ENCODE measurements at regions of chr4 and their contacts with region 1.

Region 1: GRCh38 chr4:125541836-125542385 is 227.2 kb downstream of the FAT4 start:
- DNase-seq: no peak
- H3K4me3 ChIP-seq: no peak overlapping the region
- H3K27ac ChIP-seq: no peak overlapping the region
- H3K4me1 ChIP-seq: no peaks in the 10 kb centered on the region
- H3K27me3 ChIP-seq: no peaks in the 10 kb centered on the region
- CTCF ChIP-seq: no peak
- POLR2A ChIP-seq: no peak

Region 2: GRCh38 chr4:125489952-125490690 is 51.8 kb before region 1 on chr4:
- intact Hi-C with region 1: no loop called
- DNase-seq: no peak
- H3K4me3 ChIP-seq: no peak overlapping the region
- H3K27ac ChIP-seq: no peak overlapping the region
- H3K4me1 ChIP-seq: no peaks in the 10 kb centered on the region
- H3K27me3 ChIP-seq: no peaks in the 10 kb centered on the region
- CTCF ChIP-seq: no peak
- POLR2A ChIP-seq: no peak

Region 3: DNA sequence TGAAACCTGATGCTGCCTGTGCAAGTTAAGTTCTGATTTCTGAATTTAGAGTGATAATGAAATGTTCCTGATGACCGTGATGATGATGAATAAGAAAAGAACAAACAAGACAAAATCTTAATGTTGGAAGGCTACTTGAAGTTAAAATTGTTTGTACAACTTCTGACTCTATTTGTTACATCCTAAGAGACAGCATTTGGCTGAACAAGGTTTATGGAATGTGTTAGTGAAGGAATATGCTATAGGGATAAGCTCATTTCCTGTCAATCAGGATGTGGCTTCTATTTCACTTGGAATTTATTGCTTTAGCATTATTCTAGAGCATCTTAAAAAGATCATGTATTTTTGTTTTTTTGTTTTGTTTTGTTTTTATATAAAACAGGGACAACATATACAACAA is 40.4 kb after region 1 on chr4:
- intact Hi-C with region 1: loop called (anchors 1 kb)
- DNase-seq: no peak
- H3K4me3 ChIP-seq: no peak overlapping the region
- H3K27ac ChIP-seq: no peak overlapping the region
- H3K4me1 ChIP-seq: no peaks in the 10 kb centered on the region
- H3K27me3 ChIP-seq: no peaks in the 10 kb centered on the region
- CTCF ChIP-seq: no peak
- POLR2A ChIP-seq: no peak

Measured in vagina (tissue), 2 donors.